Activated naive CD4-positive, alpha-beta T cell treated with anti-CD3 and anti-CD28 coated beads, Interleukin-2, amount 10 ng/mL, durations not matched to agents 7 days and 5 days (primary cell): ENCODE measurements at regions of chr13 and their contacts with region 1.

Region 1: DNA sequence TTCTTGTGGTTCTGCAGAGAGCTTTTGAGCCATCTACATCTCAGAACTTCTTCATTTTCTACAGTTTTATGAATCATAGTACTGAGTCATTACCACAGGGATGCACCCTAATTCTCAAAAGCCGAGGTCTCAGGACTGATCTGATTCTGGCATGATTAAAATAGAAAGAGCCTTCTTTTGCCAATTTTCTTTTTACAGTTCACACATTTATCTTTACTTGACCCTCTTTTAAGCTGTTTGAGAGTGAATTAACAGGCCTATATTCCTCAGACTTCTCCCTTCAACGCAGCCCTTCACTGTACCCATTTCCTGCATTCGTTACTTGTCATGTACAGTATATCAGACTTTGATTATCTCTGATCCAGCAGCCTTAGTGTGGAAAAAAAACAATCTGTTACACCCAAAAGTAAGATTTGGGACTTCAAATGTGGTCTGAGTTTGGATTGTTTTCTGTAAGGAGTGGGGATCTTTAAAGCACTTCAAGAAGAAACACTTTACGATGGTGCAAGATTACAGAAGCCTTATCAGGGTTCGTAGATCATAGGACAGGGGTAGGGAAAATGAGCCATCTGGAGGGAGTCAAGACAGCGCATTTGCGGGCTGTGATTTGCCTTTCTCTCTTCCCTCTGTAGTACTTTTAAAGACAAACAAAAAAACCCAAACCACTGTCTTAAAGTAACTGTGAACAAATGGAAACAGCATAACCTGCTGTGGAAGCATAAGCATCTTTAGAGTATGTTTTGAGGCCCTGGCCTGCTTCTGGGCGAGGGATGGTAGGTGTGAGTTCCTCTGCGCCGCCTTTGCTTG is 15.3 kb upstream of the GPR183 start:
- DNase-seq: peak; percentile 48
- H3K4me3 Mint-ChIP-seq: peak overlapping the region; percentile 16
- H3K27ac Mint-ChIP-seq: peak overlapping the region; percentile 91
- H3K4me1 Mint-ChIP-seq: peaks cover 64% of the 10 kb centered on the region
- H3K27me3 Mint-ChIP-seq: no peaks in the 10 kb centered on the region

Region 2: GRCh38 chr13:99356158-99357091 is 33.9 kb after region 1 on chr13:
- CTCF ChIA-PET with region 1: interaction called, 12 read pairs
- DNase-seq: peak; percentile 79
- H3K4me3 Mint-ChIP-seq: peak overlapping the region; percentile 53
- H3K27ac Mint-ChIP-seq: peak overlapping the region; percentile 95
- H3K4me1 Mint-ChIP-seq: peaks cover 99% of the 10 kb centered on the region
- H3K27me3 Mint-ChIP-seq: no peaks in the 10 kb centered on the region